ENCODE measurements at regions of chr10 and their contacts with region 1.

Region 1: DNA sequence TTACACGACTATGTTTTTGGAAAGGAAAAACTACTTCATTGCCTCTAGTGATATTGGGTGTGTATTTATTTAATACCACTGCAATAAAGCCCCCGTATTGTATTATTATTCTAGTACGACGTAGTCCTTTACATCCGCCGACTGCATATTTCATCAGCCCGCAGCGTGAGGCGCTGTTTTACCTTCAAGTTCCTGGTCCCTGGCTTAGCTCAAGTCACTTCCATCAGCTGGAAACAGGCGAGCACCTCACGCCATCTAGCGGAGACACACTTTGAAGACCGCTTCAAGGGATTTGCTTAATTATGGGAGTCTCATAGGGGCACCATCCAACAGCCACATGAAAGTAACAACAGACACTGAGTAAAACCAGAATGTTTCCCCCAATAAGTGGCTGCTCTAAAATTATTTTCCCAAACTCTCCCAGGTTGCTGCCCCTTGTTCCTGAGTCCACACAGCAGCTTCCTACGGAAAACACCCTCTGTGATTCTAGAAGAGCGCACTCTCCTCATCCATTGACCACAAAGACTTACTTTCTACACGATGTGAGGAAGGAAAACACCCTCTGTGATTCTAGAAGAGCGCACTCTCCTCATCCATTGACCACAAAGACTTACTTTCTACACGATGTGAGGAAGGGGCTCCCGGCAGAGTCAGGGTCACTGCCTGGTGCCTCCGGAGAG is 15.7 kb upstream of the ITIH2 start:
- DNase-seq: peak; percentile 86
- H3K4me3 ChIP-seq: no peak overlapping the region
- H3K27ac ChIP-seq: no peak overlapping the region
- H3K4me1 ChIP-seq: no peaks in the 10 kb centered on the region
- H3K27me3 ChIP-seq: peaks cover 0 to 1% of the 10 kb centered on the region in 2 experiments
- CTCF ChIP-seq: peak; percentile 83 to 88
- POLR2A ChIP-seq: no peak

Region 2: DNA sequence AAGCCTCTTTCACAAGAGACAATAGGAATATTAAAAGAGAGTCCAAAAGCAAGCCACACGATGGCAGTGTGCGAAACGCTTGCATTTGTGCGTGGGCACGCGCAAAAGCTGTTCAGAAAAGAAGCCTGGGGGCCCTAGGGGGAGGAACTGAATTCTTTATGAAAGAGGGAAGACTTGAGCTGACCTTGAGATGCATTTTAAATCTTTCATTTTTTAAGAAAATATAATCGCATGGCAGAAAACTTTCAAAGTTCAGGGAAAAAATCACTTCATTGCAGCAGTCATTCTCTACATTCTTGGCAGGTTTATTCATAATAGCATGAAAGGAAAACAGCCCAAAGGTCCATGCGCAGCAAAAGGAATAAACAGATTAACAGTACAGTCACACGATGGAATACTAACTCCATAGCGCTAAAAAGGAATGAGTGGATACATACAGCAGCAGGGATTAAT is 900.8 kb before region 1 on chr10:
- CTCF ChIA-PET with region 1: no interaction called
- POLR2A ChIA-PET with region 1: no interaction called
- dilution Hi-C with region 1: no loop called
- intact Hi-C with region 1: loop called (anchors 10 kb)
- DNase-seq: peak; percentile 76
- H3K4me3 ChIP-seq: no peak overlapping the region
- H3K27ac ChIP-seq: no peak overlapping the region
- H3K4me1 ChIP-seq: no peaks in the 10 kb centered on the region
- H3K27me3 ChIP-seq: peaks cover 3 to 10% of the 10 kb centered on the region in 2 experiments
- CTCF ChIP-seq: peak; percentile 35 to 46
- POLR2A ChIP-seq: no peak

Region 3: GRCh38 chr10:7260412-7260900 is 426.9 kb before region 1 on chr10:
- CTCF ChIA-PET with region 1: no interaction called
- POLR2A ChIA-PET with region 1: no interaction called
- dilution Hi-C with region 1: no loop called
- intact Hi-C with region 1: loop called (anchors 5 kb)
- DNase-seq: peak; percentile 64
- H3K4me3 ChIP-seq: no peak overlapping the region
- H3K27ac ChIP-seq: no peak overlapping the region
- H3K4me1 ChIP-seq: peaks cover 10% of the 10 kb centered on the region
- H3K27me3 ChIP-seq: no peaks in the 10 kb centered on the region
- CTCF ChIP-seq: peak; percentile 46 to 57
- POLR2A ChIP-seq: no peak

Region 4: GRCh38 chr10:7657551-7657950 is 29.8 kb before region 1 on chr10:
- CTCF ChIA-PET with region 1: no interaction called
- POLR2A ChIA-PET with region 1: no interaction called
- dilution Hi-C with region 1: no loop called
- intact Hi-C with region 1: no loop called
- DNase-seq: no peak
- H3K4me3 ChIP-seq: no peak overlapping the region
- H3K27ac ChIP-seq: no peak overlapping the region
- H3K4me1 ChIP-seq: no peaks in the 10 kb centered on the region
- H3K27me3 ChIP-seq: no peaks in the 10 kb centered on the region
- CTCF ChIP-seq: no peak
- POLR2A ChIP-seq: no peak

Region 5: GRCh38 chr10:7671121-7671520 is 16.2 kb before region 1 on chr10:
- CTCF ChIA-PET with region 1: interaction called, 13 read pairs
- POLR2A ChIA-PET with region 1: no interaction called
- dilution Hi-C with region 1: no loop called
- intact Hi-C with region 1: no loop called
- DNase-seq: no peak
- H3K4me3 ChIP-seq: no peak overlapping the region
- H3K27ac ChIP-seq: no peak overlapping the region
- H3K4me1 ChIP-seq: no peaks in the 10 kb centered on the region
- H3K27me3 ChIP-seq: peaks cover 9 to 11% of the 10 kb centered on the region in 2 experiments
- CTCF ChIP-seq: no peak
- POLR2A ChIP-seq: no peak

Measured in endothelial cell of umbilical vein (primary cell).